H1 (cell line): ENCODE measurements at regions of chr10 and their contacts with region 1.

Region 1: DNA sequence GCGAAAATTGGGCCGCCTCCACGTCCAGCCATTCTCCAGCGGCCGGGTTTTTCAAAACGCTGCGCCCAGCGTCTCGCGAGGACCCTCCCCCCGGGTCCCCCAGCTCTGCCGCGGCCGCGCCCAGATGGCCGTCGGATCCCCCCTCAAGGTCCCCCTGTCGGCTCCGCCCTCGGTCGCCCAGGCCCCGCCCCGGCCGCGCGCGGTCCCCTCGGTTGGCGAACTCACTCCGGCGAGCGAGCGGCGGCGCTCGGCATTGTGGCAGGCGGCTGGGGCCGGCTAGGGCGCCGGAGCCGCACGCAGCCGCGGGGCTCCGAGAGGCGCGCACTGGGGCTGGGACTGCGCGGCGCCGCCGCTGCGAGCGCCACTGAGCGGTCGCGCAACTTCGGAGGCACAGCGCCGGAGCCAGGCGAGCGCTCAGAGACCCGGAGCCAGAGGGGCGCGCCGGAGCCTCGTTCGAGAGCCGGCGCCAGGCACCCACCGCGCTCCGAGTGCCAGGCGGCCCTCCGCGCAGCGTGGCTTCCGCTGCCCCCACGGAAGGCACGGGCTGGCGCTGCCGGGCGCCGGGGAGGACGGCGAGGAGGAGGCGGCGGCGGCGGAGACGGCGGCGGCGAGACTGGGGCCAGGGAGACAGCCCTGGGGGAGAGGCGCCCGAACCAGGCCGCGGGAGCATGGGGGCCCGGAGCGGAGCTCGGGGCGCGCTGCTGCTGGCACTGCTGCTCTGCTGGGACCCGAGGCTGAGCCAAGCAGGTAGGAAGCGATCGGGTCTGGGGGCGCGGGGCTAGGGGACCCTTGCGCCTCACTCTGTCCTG is at the start of gene UNC5B:
- DNase-seq: peak; percentile 50 to 96
- H3K4me3 ChIP-seq: peak within 1 kb of the TSS; percentile 65 to 91 (median 78)
- H3K27ac ChIP-seq: no peak within 1 kb of the TSS
- H3K4me1 ChIP-seq: peaks cover 22 to 51% (median 27%) of the 10 kb centered on the region in 4 experiments
- H3K27me3 ChIP-seq: peaks cover 1 to 31% (median 23%) of the 10 kb centered on the region in 4 experiments
- CTCF ChIP-seq: peak; percentile 51 to 64 (median 58)
- EP300 ChIP-seq: no peak
- POLR2A ChIP-seq: peak in 1 of 2 experiments; percentile 60; a peak in 1 of 3 replicates
- RAD21 ChIP-seq: peak; percentile 6 to 40; a peak in 3 of 4 replicates
- total RNA-seq, gene UNC5B: 31.8 and 31.9 TPM in 2 replicates

Region 2: GRCh38 chr10:71161425-71161824 is 51.1 kb before region 1 on chr10:
- CTCF ChIA-PET with region 1: no interaction called
- POLR2A ChIA-PET with region 1: no interaction called
- DNase-seq: no peak
- H3K4me3 ChIP-seq: no peak overlapping the region
- H3K27ac ChIP-seq: no peak overlapping the region
- H3K4me1 ChIP-seq: no peaks in the 10 kb centered on the region
- H3K27me3 ChIP-seq: peaks cover 0 to 1% (median 0%) of the 10 kb centered on the region in 4 experiments; a peak in 1 of 7 replicates
- CTCF ChIP-seq: no peak
- EP300 ChIP-seq: no peak
- POLR2A ChIP-seq: no peak
- RAD21 ChIP-seq: no peak

Region 3: DNA sequence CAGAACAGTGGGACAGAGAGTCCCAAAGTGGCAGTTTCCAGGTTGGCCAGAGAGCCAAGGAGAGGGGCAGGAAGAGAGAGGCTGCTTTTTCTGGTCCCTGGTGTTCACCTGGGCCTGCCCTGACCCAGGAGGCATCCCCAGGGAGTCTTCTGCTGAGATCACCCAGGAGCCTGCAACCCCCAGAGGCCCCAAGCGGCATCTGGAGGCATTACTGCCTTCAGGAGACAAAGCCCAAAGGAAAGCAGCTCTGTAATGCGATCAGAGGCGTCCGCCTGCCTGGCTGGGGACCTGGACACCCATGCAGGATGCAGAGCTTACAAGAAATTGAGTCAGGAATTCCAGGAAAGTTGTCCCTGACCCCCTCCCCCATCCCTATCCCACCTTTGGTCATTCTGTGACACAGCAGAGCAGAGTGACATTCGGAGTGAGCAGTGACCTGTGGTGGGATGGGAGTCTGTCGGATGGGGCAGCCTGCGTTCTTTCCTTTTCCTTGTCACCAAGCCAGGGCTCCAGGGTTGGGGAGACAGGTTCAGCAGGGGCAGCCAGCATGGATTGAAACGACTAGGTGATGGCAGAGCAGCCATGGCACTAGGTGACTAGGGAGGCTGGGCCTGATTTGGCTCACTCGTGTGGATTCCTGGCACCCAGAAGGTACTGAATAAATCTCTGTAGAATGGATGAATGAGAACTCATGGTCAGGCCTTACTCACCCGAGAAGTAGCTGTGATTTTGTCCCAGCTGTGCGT is 10.3 kb after region 1 on chr10:
- CTCF ChIA-PET with region 1: interaction called, 5 read pairs
- POLR2A ChIA-PET with region 1: interaction called, 17 read pairs
- DNase-seq: no peak
- H3K4me3 ChIP-seq: no peak overlapping the region
- H3K27ac ChIP-seq: no peak overlapping the region; the same call in 1 of the 2 replicates
- H3K4me1 ChIP-seq: peaks cover 8 to 33% (median 14%) of the 10 kb centered on the region in 4 experiments
- H3K27me3 ChIP-seq: no peaks in the 10 kb centered on the region
- CTCF ChIP-seq: peak; percentile 37 to 47 (median 38)
- EP300 ChIP-seq: no peak
- POLR2A ChIP-seq: no peak
- RAD21 ChIP-seq: peak; percentile 11 to 43; a peak in 2 of 4 replicates

Region 4: GRCh38 chr10:71229726-71230655 is 17.5 kb after region 1 on chr10:
- CTCF ChIA-PET with region 1: interaction called, 16 read pairs
- POLR2A ChIA-PET with region 1: interaction called, 14 read pairs
- DNase-seq: no peak
- H3K4me3 ChIP-seq: no peak overlapping the region
- H3K27ac ChIP-seq: no peak overlapping the region
- H3K4me1 ChIP-seq: peaks cover 4 to 14% (median 7%) of the 10 kb centered on the region in 4 experiments; a peak in 6 of 7 replicates
- H3K27me3 ChIP-seq: 0 out of 7 replicates have a peak, but pooled peaks cover 0 to 2% (median 0%) of the 10 kb centered on the region in 4 experiments
- CTCF ChIP-seq: no peak
- EP300 ChIP-seq: no peak
- POLR2A ChIP-seq: no peak
- RAD21 ChIP-seq: no peak

Region 5: GRCh38 chr10:71234970-71235685 is 22.6 kb after region 1 on chr10:
- CTCF ChIA-PET with region 1: interaction called, 16 read pairs
- POLR2A ChIA-PET with region 1: interaction called, 14 read pairs
- DNase-seq: no peak
- H3K4me3 ChIP-seq: no peak overlapping the region
- H3K27ac ChIP-seq: no peak overlapping the region
- H3K4me1 ChIP-seq: peaks cover 7 to 17% (median 13%) of the 10 kb centered on the region in 4 experiments
- H3K27me3 ChIP-seq: 0 out of 7 replicates have a peak, but pooled peaks cover 0 to 2% (median 0%) of the 10 kb centered on the region in 4 experiments
- CTCF ChIP-seq: no peak
- EP300 ChIP-seq: no peak
- POLR2A ChIP-seq: no peak
- RAD21 ChIP-seq: no peak

Region 6: DNA sequence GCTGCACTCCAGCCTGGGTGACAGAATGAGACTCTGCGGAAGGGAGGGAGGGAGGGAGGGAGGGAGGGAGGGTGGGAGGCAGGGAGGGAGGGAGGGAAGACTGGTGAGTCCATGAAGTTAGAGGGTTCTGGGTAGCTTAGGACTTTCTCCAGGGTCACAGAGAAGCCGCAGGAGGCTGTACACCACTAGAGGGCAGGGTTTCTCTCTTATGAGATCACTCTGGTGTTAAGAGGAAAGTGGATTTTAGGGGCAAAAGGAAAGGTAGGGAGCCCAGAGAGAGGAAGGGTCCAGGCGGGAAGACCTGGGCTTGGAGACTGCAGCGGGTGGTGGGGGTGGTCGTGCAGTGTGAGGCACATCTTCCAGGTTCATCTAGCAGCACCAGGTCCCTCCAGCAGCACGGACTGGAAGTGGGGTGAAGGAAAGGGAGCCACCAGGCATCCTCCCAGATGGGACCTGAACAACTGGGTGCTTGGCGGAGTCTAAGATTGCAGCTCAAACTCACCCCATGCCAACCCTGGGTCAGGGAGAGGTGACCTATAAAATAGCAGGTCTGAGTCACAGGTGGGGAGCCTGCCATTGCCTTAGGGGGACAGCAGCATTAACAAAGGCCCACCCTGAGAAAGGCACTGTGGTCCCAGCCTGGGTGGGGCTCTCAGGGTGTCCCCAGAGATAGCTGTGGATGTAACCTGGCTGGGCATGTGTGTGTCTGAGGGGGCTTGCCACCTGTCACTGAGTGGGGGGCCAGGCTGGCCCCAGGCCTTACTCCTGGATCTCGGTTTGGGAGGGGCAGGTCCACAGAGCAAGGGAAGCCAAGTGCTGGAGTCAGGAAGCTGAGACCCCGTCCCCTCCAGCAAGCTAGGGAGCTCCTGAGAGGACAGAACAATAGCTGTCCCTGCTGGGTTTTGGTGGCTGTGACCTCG is 58.0 kb after region 1 on chr10:
- CTCF ChIA-PET with region 1: interaction called, 138 read pairs
- POLR2A ChIA-PET with region 1: interaction called, 45 read pairs
- DNase-seq: peak; percentile 47 to 75
- H3K4me3 ChIP-seq: peak overlapping the region in 1 of 4 experiments; percentile 18; a peak in 1 of 8 replicates
- H3K27ac ChIP-seq: no peak overlapping the region; the same call in 1 of the 2 replicates
- H3K4me1 ChIP-seq: peaks cover 5 to 41% (median 30%) of the 10 kb centered on the region in 4 experiments
- H3K27me3 ChIP-seq: no peaks in the 10 kb centered on the region
- CTCF ChIP-seq: peak; percentile 46 to 68 (median 66)
- EP300 ChIP-seq: no peak
- POLR2A ChIP-seq: no peak
- RAD21 ChIP-seq: peak; percentile 49 to 66

Region 7: GRCh38 chr10:71278691-71279588 is 66.4 kb after region 1 on chr10:
- CTCF ChIA-PET with region 1: interaction called, 36 read pairs
- POLR2A ChIA-PET with region 1: interaction called, 4 read pairs
- DNase-seq: no peak
- H3K4me3 ChIP-seq: no peak overlapping the region
- H3K27ac ChIP-seq: no peak overlapping the region; the same call in 1 of the 2 replicates
- H3K4me1 ChIP-seq: peaks cover 0 to 25% (median 16%) of the 10 kb centered on the region in 4 experiments; a peak in 6 of 7 replicates
- H3K27me3 ChIP-seq: no peaks in the 10 kb centered on the region
- CTCF ChIP-seq: no peak
- EP300 ChIP-seq: no peak
- POLR2A ChIP-seq: no peak
- RAD21 ChIP-seq: no peak

Region 8: GRCh38 chr10:71285180-71285545 is 72.6 kb after region 1 on chr10:
- CTCF ChIA-PET with region 1: interaction called, 36 read pairs
- POLR2A ChIA-PET with region 1: no interaction called
- DNase-seq: peak in 1 of 2 experiments; percentile 85
- H3K4me3 ChIP-seq: no peak overlapping the region
- H3K27ac ChIP-seq: no peak overlapping the region
- H3K4me1 ChIP-seq: no peaks in the 10 kb centered on the region
- H3K27me3 ChIP-seq: no peaks in the 10 kb centered on the region
- CTCF ChIP-seq: peak; percentile 80 to 85 (median 85)
- EP300 ChIP-seq: no peak
- POLR2A ChIP-seq: no peak
- RAD21 ChIP-seq: peak; percentile 91

Region 9: GRCh38 chr10:71424496-71425194 is 212.1 kb after region 1 on chr10:
- CTCF ChIA-PET with region 1: no interaction called
- POLR2A ChIA-PET with region 1: no interaction called
- DNase-seq: peak in 1 of 2 experiments; percentile 43
- H3K4me3 ChIP-seq: no peak overlapping the region
- H3K27ac ChIP-seq: no peak overlapping the region
- H3K4me1 ChIP-seq: peaks cover 0 to 2% (median 2%) of the 10 kb centered on the region in 4 experiments; a peak in 3 of 7 replicates
- H3K27me3 ChIP-seq: peaks cover 0 to 4% (median under 1%) of the 10 kb centered on the region in 4 experiments; a peak in 3 of 7 replicates
- CTCF ChIP-seq: no peak
- EP300 ChIP-seq: no peak
- POLR2A ChIP-seq: no peak
- RAD21 ChIP-seq: no peak